Calu3 (cell line): ENCODE measurements at regions of chr20 and their contacts with region 1.

Region 1: DNA sequence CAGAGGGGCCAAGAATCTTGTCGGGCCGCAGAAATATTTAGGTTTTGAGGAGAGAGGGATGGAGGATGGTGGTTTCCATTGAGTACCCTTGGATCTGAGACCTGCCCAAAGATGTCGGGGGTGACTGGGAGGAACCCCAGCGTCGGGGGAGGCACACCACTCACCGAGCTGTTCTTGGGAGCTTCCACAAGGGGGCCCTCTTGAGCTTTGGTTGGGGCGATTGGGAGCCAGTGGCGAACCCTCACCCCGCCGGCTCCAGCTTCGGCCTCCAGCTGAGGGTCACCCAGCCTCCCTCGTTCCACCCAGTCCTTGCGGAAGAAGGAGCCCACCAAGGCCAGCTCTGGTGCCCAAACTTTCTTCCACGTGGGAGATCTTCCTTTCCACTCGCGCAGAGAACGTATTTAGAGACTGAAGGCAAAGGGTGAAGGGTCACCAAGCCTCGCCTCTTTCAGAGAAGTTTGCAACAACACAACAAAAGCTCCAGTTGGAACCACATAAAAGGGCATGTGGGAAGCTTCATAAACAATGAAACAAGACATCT is 33.6 kb downstream of the APCDD1L start:
- DNase-seq: peak; percentile 61
- H3K4me3 Mint-ChIP-seq: no peak overlapping the region
- H3K27ac Mint-ChIP-seq: no peak overlapping the region
- H3K4me1 Mint-ChIP-seq: no peaks in the 10 kb centered on the region
- H3K27me3 Mint-ChIP-seq: peaks cover 50% of the 10 kb centered on the region
- CTCF ChIP-seq: peak; percentile 61

Region 2: GRCh38 chr20:58650776-58651558 is 169.4 kb after region 1 on chr20 and contains the start of gene STX16:
- CTCF ChIA-PET with region 1: interaction called, 12 read pairs
- intact Hi-C with region 1: loop called (anchors 5 kb)
- DNase-seq: peak; percentile 96
- H3K4me3 Mint-ChIP-seq: peak within 1 kb of the TSS; percentile 97
- H3K27ac Mint-ChIP-seq: peak within 1 kb of the TSS; percentile 83
- H3K4me1 Mint-ChIP-seq: peaks cover 19% of the 10 kb centered on the region
- H3K27me3 Mint-ChIP-seq: no peaks in the 10 kb centered on the region
- CTCF ChIP-seq: peak; percentile 96
- total RNA-seq, gene STX16: 86.0 and 99.7 TPM in 2 replicates